ENCODE measurements at regions of chr3 and their contacts with region 1.

Region 1: GRCh38 chr3:56997675-56998074 is 62.8 kb upstream of the SPATA12 start:
- DNase-seq: no peak
- ATAC-seq: no peak
- H3K4me3 ChIP-seq: no peak overlapping the region
- H3K27ac ChIP-seq: no peak overlapping the region
- H3K4me1 ChIP-seq: peaks cover 7% of the 10 kb centered on the region
- H3K27me3 ChIP-seq: no peaks in the 10 kb centered on the region
- CTCF ChIP-seq: no peak

Region 2: GRCh38 chr3:56939834-56940233 is 57.8 kb before region 1 on chr3:
- CTCF ChIA-PET with region 1: interaction called, 12 read pairs
- POLR2A ChIA-PET with region 1: no interaction called
- in situ Hi-C with region 1: no loop called
- intact Hi-C with region 1: no loop called
- DNase-seq: no peak
- ATAC-seq: no peak
- H3K4me3 ChIP-seq: no peak overlapping the region
- H3K27ac ChIP-seq: no peak overlapping the region
- H3K4me1 ChIP-seq: no peaks in the 10 kb centered on the region
- H3K27me3 ChIP-seq: no peaks in the 10 kb centered on the region
- CTCF ChIP-seq: no peak

Measured in Panc1 (cell line).